Vagina (tissue), 2 donors: ENCODE measurements at regions of chr1 and their contacts with region 1.

Region 1: DNA sequence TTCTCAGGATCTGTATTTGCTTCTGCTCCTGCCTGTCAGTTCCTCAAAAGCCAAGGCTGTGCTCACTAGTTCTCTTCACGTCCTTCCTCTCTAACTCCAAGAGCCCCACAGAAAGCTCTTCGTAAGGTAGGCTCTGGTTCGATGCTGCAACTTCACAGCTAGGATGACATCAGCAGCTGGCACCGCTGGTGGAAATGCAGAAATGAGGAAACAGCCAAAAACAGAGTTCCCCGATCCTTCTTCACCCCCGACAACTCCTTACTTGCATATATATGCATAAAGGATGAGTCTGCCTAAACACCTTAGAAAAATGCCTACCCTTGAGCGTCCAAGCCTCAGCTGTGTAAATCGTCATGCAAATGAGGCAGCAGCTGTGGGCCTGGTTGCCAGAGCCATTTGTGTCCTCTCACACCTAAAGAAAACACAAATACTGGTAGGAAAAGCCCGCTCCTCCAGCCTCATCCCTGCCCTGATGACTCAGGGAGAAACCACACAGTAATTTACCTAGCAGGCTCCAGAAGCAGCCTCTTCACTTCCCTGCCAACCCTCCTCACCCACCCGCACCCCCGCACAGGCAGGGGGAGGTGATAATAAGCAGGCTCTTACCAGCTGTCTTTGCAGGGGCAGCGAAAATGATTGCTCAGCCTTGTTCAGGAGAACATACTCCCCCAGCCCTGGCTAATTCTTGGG is 28.2 kb downstream of the BATF3 start:
- DNase-seq: peak in 1 of 2 donors; percentile 88
- H3K4me3 ChIP-seq: no peak overlapping the region
- H3K27ac ChIP-seq: no peak overlapping the region
- H3K4me1 ChIP-seq: peaks cover 15% of the 10 kb centered on the region
- H3K27me3 ChIP-seq: no peaks in the 10 kb centered on the region
- CTCF ChIP-seq: no peak
- POLR2A ChIP-seq: no peak

Region 2: GRCh38 chr1:213008564-213008963 is 337.1 kb after region 1 on chr1:
- intact Hi-C with region 1: loop called (anchors 10 kb)
- DNase-seq: no peak
- H3K4me3 ChIP-seq: no peak overlapping the region
- H3K27ac ChIP-seq: no peak overlapping the region
- H3K4me1 ChIP-seq: peaks cover 2% of the 10 kb centered on the region
- H3K27me3 ChIP-seq: no peaks in the 10 kb centered on the region
- CTCF ChIP-seq: no peak
- POLR2A ChIP-seq: no peak

Region 3: DNA sequence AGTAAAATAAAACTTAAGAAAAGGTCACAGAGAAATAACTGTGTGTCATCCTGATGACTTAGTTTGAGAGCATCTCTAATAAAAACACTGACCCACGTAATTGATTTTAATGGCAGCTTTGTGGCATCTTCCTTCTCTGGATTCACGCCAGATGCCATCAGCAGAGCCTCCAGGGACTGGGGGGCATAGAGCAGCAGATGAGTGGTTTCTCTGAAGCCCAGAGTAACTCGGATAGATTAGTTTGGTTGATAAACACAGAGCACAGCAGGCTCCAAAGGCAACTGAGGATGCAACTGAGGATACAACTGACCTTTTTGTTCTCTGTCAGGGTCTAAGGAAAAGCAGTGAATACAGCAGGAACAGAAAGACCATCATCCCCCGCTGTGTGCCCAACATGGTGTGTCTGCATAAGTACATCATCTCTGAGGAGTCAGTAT is 560.3 kb after region 1 on chr1:
- intact Hi-C with region 1: no loop called
- DNase-seq: no peak
- H3K4me3 ChIP-seq: no peak overlapping the region
- H3K27ac ChIP-seq: no peak overlapping the region
- H3K4me1 ChIP-seq: no peaks in the 10 kb centered on the region
- H3K27me3 ChIP-seq: no peaks in the 10 kb centered on the region
- CTCF ChIP-seq: no peak
- POLR2A ChIP-seq: no peak